Heart left ventricle (tissue), 16 donors: ENCODE measurements at regions of chr17 and their contacts with region 1.

Region 1: DNA sequence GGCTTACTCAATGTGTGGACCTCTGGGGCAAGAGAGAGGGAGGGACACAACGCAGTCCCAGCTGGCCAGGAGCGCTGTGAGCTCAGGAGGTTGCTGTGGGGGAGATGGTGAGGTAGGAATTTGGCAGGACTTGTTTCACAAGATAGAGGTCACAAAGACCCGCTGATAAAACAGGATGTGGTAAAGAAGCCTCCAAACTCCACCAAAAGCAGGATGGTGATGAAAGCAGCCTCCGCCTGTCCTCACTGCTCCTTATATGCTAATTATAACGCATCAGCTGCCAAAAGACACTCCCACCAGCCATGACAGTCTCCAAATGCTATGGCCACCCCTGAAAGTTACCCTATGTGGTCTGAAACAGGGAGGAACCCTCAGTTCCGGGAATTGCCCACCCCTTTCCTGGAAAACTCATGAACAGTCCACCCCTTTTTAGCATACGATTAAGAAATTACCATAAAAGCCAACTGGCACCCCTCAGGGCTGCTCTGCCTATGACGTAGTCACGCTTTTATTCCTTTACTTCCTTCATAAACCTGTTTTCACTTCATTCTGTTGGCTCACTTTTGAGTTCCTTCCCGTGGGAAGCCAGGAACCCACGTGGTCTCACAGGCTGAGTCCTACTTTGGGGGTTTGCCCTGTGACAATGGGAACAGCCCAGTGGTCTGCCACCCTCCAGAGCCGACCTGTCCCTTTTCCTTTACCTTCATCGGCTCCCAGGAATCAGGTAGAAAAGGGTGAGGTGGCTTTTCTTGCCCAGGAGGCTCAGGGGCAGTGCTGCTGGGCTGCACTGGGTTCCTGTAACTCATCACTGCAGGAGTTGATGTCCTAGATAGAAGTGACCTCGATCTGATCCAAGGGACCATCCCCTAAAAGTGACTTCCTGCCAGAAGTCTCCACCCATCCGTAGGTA is 5.4 kb upstream of the EIF4A3 start:
- DNase-seq: no peak
- ATAC-seq: no peak
- H3K4me3 ChIP-seq: no peak overlapping the region
- H3K27ac ChIP-seq: no peak overlapping the region
- H3K4me1 ChIP-seq: peaks cover 0 to 18% (median 6%) of the 10 kb centered on the region in 12 donors
- H3K27me3 ChIP-seq: no peaks in the 10 kb centered on the region
- CTCF ChIP-seq: no peak
- POLR2A ChIP-seq: no peak

Region 2: DNA sequence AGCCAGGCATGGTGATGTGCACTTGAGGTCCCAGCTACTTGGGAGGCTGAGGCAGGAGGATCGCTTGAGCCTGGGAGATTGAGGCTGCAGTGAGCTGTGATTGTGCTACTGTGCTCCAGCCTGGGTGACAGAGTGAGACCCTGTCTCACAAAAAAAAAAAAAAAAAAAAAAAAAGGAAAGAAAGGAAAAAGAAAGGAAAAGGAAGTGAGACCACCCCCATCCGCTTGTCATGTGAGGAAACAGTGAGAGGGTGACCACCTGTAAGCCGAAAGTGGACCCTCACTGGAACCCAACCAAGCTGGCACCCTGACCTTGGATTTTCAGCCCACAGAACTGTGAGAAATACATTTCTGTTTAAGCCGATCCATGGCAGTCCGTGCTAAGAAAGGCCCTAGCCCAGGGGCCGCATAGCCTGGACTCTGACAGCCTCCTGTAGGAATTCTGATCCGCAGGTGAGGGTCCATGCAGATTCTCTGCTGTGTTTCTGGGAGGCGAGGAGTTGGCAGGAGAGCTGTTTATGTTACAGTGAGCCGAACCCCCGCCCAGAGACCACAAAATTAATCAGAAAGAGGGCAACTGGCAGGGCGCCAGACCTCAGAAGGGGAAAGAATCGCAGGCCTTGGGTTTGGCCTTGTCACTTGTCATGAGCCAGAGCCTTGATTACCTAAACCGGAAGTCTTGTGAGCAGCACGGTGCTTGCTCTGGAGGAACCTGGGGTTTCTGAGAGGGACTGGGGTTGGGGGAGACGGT is 66.9 kb after region 1 on chr17:
- intact Hi-C with region 1: loop called in 3 of 10 experiments (anchors 2 to 5 kb)
- DNase-seq: peak; percentile 61 to 86 (median 69)
- ATAC-seq: peak in 3 of 4 donors; percentile 49 to 69 (median 55)
- H3K4me3 ChIP-seq: peak overlapping the region; percentile 79 to 100 (median 96)
- H3K27ac ChIP-seq: peak overlapping the region; percentile 49 to 92 (median 78)
- H3K4me1 ChIP-seq: peaks cover 0 to 31% (median 15%) of the 10 kb centered on the region in 12 donors
- H3K27me3 ChIP-seq: no peaks in the 10 kb centered on the region
- CTCF ChIP-seq: no peak
- POLR2A ChIP-seq: no peak